Activated CD4-positive, alpha-beta T cell treated with anti-CD3 and anti-CD28 coated beads, Interleukin-2, amount 10 ng/mL, durations not matched to agents 24 days and 14 days (primary cell): ENCODE measurements at regions of chr2 and their contacts with region 1.

Region 1: GRCh38 chr2:203706403-203706802 is at the start of gene CD28:
- DNase-seq: peak; percentile 97
- H3K4me3 Mint-ChIP-seq: peak within 1 kb of the TSS; percentile 92
- H3K27ac Mint-ChIP-seq: peak within 1 kb of the TSS; percentile 98
- H3K4me1 Mint-ChIP-seq: peaks cover 46% of the 10 kb centered on the region
- H3K27me3 Mint-ChIP-seq: no peaks in the 10 kb centered on the region
- total RNA-seq, gene CD28: 130 and 132 TPM in 2 replicates

Region 2: DNA sequence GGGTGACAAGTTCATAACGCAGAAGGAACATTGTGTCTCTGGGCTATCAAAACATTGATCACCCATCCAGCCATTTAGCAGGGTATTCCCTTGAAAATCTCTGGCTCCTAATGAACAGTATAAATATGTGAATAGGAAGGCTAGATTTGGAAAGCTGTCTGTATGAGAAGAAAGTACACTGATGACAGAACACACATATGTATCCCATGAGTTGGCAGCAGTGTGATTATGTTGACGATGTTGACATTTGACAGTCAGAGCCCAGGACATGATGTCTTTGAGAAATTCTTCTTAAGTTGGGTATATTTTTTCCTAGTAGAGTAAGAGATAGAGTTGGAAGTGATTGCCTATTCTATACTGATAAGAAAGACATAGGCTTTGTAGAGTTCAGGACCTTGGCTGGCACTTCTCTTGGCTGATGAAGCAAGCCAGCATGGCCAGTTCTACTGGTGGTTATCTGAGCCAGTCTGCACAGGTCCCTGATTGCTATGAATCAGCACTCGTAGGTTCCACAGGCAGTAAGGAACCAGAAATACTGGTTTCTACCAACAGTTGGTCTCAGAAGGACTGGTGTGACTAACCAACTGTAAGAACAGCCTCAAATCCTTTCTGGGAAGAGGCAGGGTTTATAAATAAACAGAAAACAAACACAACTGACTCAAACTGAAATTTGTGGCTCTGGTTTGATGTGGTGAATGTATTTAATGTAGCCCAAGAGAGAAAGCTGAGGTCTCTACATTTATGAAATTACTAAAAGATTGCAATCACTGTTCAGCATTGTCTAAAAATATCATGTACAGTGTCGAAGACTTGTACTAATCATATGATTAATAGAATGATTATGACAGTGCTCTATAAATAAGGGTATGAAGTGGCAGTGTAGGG is 127.4 kb before region 1 on chr2:
- intact Hi-C with region 1: loop called (anchors 1 kb)
- DNase-seq: peak; percentile 87
- H3K4me3 Mint-ChIP-seq: peak overlapping the region; percentile 37
- H3K27ac Mint-ChIP-seq: peak overlapping the region; percentile 59
- H3K4me1 Mint-ChIP-seq: peaks cover 28% of the 10 kb centered on the region
- H3K27me3 Mint-ChIP-seq: peaks cover 37% of the 10 kb centered on the region

Region 3: GRCh38 chr2:203718087-203718486 is 11.7 kb after region 1 on chr2:
- intact Hi-C with region 1: loop called (anchors 1 kb)
- DNase-seq: peak; percentile 92
- H3K4me3 Mint-ChIP-seq: peak overlapping the region; percentile 66
- H3K27ac Mint-ChIP-seq: peak overlapping the region; percentile 99
- H3K4me1 Mint-ChIP-seq: peaks cover 91% of the 10 kb centered on the region
- H3K27me3 Mint-ChIP-seq: no peaks in the 10 kb centered on the region

Region 4: GRCh38 chr2:203751685-203752271 is 45.4 kb after region 1 on chr2:
- intact Hi-C with region 1: no loop called
- DNase-seq: no peak
- H3K4me3 Mint-ChIP-seq: no peak overlapping the region
- H3K27ac Mint-ChIP-seq: peak overlapping the region; percentile 35
- H3K4me1 Mint-ChIP-seq: peaks cover 35% of the 10 kb centered on the region
- H3K27me3 Mint-ChIP-seq: no peaks in the 10 kb centered on the region

Region 5: DNA sequence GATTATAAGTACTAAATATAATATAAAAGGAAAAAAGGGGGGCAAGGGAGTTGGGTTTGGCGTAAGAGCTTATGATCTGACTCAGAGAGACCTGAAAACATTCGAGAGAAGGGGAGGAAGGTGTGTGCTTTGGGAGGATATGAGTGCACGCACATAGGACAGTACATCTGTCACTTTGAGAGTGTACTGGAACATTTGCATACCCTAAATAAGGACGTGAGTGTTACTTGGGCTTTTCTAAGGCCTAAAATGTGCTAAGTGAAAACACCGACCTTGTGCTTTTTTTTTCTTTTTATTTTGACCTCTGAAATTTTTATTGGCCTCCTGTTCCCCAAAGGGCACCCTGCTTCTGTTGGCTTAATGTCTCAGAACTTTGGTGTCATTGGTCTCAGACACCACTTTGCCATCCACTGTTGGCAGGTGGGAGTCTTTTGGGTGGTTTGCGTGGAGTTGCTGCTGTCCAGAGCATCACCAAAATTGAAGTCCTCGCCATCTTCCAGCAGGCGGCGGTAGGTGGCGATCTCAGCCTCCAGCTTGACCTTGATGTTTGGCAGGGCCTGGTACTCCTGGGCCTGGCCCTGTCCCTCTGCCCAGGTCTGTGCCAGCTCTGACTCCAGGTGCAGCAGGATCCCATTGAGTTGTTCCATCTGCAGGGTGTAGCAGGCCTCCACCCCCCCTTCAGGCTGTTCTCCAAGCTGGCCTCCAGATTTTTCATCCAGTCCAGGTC is 57.7 kb after region 1 on chr2:
- intact Hi-C with region 1: loop called (anchors 1 kb)
- DNase-seq: peak; percentile 55
- H3K4me3 Mint-ChIP-seq: peak overlapping the region; percentile 19
- H3K27ac Mint-ChIP-seq: peak overlapping the region; percentile 89
- H3K4me1 Mint-ChIP-seq: peaks cover 62% of the 10 kb centered on the region
- H3K27me3 Mint-ChIP-seq: no peaks in the 10 kb centered on the region

Region 6: GRCh38 chr2:203893401-203893800 is 187.0 kb after region 1 on chr2:
- intact Hi-C with region 1: loop called (anchors 5 kb)
- DNase-seq: no peak
- H3K4me3 Mint-ChIP-seq: peak overlapping the region; percentile 21
- H3K27ac Mint-ChIP-seq: peak overlapping the region; percentile 62
- H3K4me1 Mint-ChIP-seq: peaks cover 65% of the 10 kb centered on the region
- H3K27me3 Mint-ChIP-seq: no peaks in the 10 kb centered on the region